PC-3 (cell line): ENCODE measurements at regions of chr4 and their contacts with region 1.

Region 1: DNA sequence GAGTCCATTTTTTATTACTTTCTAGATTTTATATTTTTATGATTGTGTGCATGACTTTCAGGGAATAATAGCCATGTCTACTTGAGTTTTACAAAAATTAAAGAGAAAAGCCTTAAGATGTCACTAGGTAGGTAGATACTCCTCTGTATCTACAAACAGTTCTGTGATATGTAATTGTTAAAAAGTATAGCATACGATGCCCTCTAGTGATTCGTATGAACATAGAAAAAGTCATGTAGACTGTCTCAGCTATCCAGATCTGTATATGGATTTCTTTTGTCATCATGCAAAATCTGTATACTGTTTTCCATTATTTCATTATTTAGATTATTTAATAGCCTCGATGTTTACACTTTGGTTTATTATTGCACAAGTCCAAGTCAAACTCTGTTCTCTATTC is 856.6 kb downstream of the CENPC start:
- DNase-seq: peak; percentile 67
- ATAC-seq: peak; percentile 95
- H3K4me3 ChIP-seq: no peak overlapping the region
- H3K27ac ChIP-seq: no peak overlapping the region
- H3K4me1 ChIP-seq: no peaks in the 10 kb centered on the region
- H3K27me3 ChIP-seq: no peaks in the 10 kb centered on the region
- CTCF ChIP-seq: peak; percentile 77

Region 2: GRCh38 chr4:65007841-65008439 is 1680.7 kb before region 1 on chr4:
- CTCF ChIA-PET with region 1: no interaction called
- POLR2A ChIA-PET with region 1: no interaction called
- intact Hi-C with region 1: loop called (anchors 5 kb)
- DNase-seq: peak; percentile 86
- ATAC-seq: peak; percentile 63
- H3K4me3 ChIP-seq: no peak overlapping the region
- H3K27ac ChIP-seq: no peak overlapping the region
- H3K4me1 ChIP-seq: no peaks in the 10 kb centered on the region
- H3K27me3 ChIP-seq: no peaks in the 10 kb centered on the region
- CTCF ChIP-seq: peak; percentile 91

Region 3: GRCh38 chr4:65880594-65880993 is 808.1 kb before region 1 on chr4:
- CTCF ChIA-PET with region 1: no interaction called
- POLR2A ChIA-PET with region 1: no interaction called
- intact Hi-C with region 1: loop called (anchors 5 kb)
- DNase-seq: peak; percentile 48
- ATAC-seq: peak; percentile 64
- H3K4me3 ChIP-seq: no peak overlapping the region
- H3K27ac ChIP-seq: no peak overlapping the region
- H3K4me1 ChIP-seq: no peaks in the 10 kb centered on the region
- H3K27me3 ChIP-seq: no peaks in the 10 kb centered on the region
- CTCF ChIP-seq: peak; percentile 50

Region 4: DNA sequence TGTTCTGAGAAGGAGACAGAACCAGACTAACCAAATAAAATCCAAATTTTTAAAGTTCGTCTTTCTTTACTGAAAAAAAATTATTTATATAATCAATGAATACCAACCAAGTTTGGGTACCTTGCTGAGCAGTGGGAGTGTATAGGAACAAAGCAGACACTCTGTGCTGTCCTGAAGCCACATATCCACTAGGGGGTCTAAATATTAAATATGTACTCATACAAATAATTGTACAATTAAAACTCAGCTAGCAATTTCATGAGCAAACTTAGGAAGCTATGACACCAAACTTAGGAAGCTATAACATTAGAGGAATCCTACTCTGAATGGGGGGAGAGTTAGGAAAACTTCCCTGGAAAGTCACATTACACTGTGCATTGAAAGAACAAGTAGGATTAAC is 436.4 kb before region 1 on chr4:
- CTCF ChIA-PET with region 1: no interaction called
- POLR2A ChIA-PET with region 1: no interaction called
- intact Hi-C with region 1: loop called (anchors 5 kb)
- DNase-seq: peak; percentile 57
- ATAC-seq: peak; percentile 85
- H3K4me3 ChIP-seq: no peak overlapping the region
- H3K27ac ChIP-seq: no peak overlapping the region
- H3K4me1 ChIP-seq: no peaks in the 10 kb centered on the region
- H3K27me3 ChIP-seq: no peaks in the 10 kb centered on the region
- CTCF ChIP-seq: peak; percentile 75

Region 5: GRCh38 chr4:66575024-66575696 is 113.5 kb before region 1 on chr4:
- CTCF ChIA-PET with region 1: no interaction called
- POLR2A ChIA-PET with region 1: no interaction called
- intact Hi-C with region 1: loop called (anchors 2 kb)
- DNase-seq: peak; percentile 98
- ATAC-seq: peak; percentile 83
- H3K4me3 ChIP-seq: peak overlapping the region; percentile 60
- H3K27ac ChIP-seq: peak overlapping the region; percentile 93
- H3K4me1 ChIP-seq: peaks cover 51% of the 10 kb centered on the region
- H3K27me3 ChIP-seq: no peaks in the 10 kb centered on the region
- CTCF ChIP-seq: no peak

Region 6: GRCh38 chr4:66606908-66607307 is 81.8 kb before region 1 on chr4:
- CTCF ChIA-PET with region 1: no interaction called
- POLR2A ChIA-PET with region 1: no interaction called
- intact Hi-C with region 1: no loop called
- DNase-seq: no peak
- ATAC-seq: no peak
- H3K4me3 ChIP-seq: no peak overlapping the region
- H3K27ac ChIP-seq: no peak overlapping the region
- H3K4me1 ChIP-seq: no peaks in the 10 kb centered on the region
- H3K27me3 ChIP-seq: no peaks in the 10 kb centered on the region
- CTCF ChIP-seq: no peak

Region 7: DNA sequence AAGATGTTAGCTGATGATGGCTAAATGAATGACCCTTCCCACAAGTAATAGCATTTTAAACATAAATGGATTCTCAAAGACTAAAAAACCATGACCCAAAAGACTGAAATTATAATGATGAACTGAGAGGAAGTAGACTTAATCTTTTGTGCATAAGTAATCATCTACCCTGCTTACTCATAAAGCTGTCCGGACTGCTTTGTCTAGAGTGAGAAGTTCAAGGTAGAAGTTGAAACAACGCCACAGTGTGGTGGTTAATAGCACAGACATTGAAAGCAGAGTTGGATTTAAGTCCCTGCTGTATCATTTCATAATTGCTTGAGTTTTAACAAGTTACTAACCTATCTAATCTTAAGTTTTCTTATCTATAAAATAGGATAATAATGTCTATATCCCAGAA is 510.1 kb after region 1 on chr4:
- CTCF ChIA-PET with region 1: interaction called, 13 read pairs
- POLR2A ChIA-PET with region 1: no interaction called
- intact Hi-C with region 1: no loop called
- DNase-seq: peak; percentile 77
- ATAC-seq: peak; percentile 93
- H3K4me3 ChIP-seq: no peak overlapping the region
- H3K27ac ChIP-seq: no peak overlapping the region
- H3K4me1 ChIP-seq: no peaks in the 10 kb centered on the region
- H3K27me3 ChIP-seq: no peaks in the 10 kb centered on the region
- CTCF ChIP-seq: peak; percentile 79